Activated CD4-positive, alpha-beta memory T cell treated with anti-CD3 and anti-CD28 coated beads for 36 hours (primary cell): ENCODE measurements at regions of chr9 and their contacts with region 1.

Region 1: DNA sequence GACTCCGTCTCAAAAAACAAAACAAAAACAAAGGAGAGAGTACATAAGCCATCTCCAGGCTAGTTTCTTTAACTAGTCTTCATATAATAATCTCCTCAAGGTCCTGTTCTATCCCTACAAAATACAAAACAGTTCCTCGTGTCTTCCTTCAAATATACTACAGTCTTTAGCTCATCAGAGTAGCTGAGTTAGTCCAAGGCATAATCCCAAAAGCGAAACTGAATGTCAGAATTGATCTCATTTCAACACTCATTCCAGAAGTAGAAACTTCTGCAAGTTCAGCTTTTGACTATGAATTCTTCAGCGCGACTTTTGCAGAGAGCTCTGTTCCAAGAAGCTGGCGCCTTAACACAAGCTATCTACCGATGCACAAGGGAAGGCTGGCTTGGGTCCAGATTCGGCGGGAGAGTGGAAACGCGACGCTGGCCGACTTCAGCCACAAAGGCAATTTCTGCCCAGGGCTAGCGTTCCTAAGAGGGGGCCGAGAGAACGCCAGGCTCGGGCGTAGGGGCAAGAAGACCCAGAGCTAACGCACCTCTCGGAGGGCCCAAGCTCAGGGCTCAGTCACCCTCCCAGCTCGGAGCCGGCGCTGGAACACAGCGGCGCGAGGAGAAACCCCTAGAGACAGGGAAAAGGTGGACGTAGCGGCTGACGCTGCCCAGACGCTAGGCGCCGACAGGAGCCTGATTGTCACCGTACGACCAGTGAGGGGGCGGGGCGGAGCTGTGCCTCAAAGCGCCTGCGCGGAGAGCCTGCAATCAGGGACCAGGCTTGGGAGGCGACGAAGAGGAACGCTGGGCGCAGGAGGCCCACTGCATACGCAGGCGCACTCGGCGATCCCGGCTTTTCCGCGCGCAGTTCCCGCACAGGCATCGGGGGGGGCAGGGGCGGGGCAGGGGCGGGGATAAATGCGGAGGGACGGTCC is 469 bp upstream of the HSDL2 start:
- DNase-seq: peak; percentile 99
- H3K4me3 Mint-ChIP-seq: peak overlapping the region; percentile 97
- H3K27ac Mint-ChIP-seq: peak overlapping the region; percentile 98
- H3K4me1 Mint-ChIP-seq: peaks cover 40% of the 10 kb centered on the region
- H3K27me3 Mint-ChIP-seq: no peaks in the 10 kb centered on the region

Region 2: GRCh38 chr9:111743275-111743674 is 636.2 kb before region 1 on chr9:
- CTCF ChIA-PET with region 1: no interaction called
- POLR2A ChIA-PET with region 1: no interaction called
- intact Hi-C with region 1: loop called (anchors 5 kb)
- DNase-seq: peak; percentile 59
- H3K4me3 Mint-ChIP-seq: no peak overlapping the region
- H3K27ac Mint-ChIP-seq: peak overlapping the region; percentile 80
- H3K4me1 Mint-ChIP-seq: peaks cover 10% of the 10 kb centered on the region
- H3K27me3 Mint-ChIP-seq: no peaks in the 10 kb centered on the region

Region 3: DNA sequence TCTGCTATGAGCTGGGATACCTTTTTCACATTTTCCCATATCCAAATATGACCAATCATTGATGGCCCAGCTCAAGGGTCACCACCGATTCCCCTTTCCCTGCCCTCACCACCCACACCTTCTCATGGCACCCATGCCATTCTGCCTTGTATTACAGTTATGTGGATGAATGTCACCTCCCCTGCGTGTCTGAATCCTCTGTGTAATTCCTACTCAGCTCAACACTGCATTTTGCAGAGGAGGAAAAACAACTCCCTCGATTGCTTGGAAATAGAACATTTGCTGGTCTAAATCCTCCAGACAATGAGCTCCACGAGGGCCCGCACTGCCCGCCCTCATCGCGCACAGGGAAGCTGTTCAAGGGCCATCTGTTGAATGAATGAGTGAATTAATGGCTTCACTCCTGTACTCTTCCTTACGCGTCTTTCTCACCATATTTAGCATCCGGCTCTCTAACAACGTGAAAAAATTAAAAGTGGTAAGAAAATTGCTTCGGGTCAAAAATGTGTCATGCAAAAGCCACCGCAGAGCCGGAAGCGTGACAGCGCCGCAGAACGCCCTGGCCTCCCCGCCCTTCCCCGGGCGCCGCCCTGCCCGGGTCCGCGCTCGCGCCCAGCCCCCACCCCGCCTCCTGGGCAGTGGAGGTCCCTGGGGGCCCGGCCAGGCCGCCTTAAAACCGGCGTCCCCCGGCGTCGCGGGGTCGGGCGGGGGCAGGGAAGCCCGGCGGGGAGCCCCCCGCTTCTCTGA is 205.0 kb before region 1 on chr9:
- CTCF ChIA-PET with region 1: interaction called, 4 read pairs
- POLR2A ChIA-PET with region 1: interaction called, 3 read pairs
- intact Hi-C with region 1: loop called (anchors 1 kb)
- DNase-seq: peak; percentile 88
- H3K4me3 Mint-ChIP-seq: peak overlapping the region; percentile 80
- H3K27ac Mint-ChIP-seq: peak overlapping the region; percentile 84
- H3K4me1 Mint-ChIP-seq: peaks cover 40% of the 10 kb centered on the region
- H3K27me3 Mint-ChIP-seq: peaks cover 8% of the 10 kb centered on the region

Region 4: GRCh38 chr9:112278152-112278551 is 101.3 kb before region 1 on chr9:
- CTCF ChIA-PET with region 1: no interaction called
- POLR2A ChIA-PET with region 1: no interaction called
- intact Hi-C with region 1: no loop called
- DNase-seq: no peak
- H3K4me3 Mint-ChIP-seq: no peak overlapping the region
- H3K27ac Mint-ChIP-seq: no peak overlapping the region
- H3K4me1 Mint-ChIP-seq: peaks cover 56% of the 10 kb centered on the region
- H3K27me3 Mint-ChIP-seq: no peaks in the 10 kb centered on the region

Region 5: GRCh38 chr9:112348257-112349007 is 31.0 kb before region 1 on chr9:
- CTCF ChIA-PET with region 1: no interaction called
- POLR2A ChIA-PET with region 1: no interaction called
- intact Hi-C with region 1: no loop called
- DNase-seq: peak; percentile 87
- H3K4me3 Mint-ChIP-seq: peak overlapping the region; percentile 76
- H3K27ac Mint-ChIP-seq: peak overlapping the region; percentile 80
- H3K4me1 Mint-ChIP-seq: peaks cover 13% of the 10 kb centered on the region
- H3K27me3 Mint-ChIP-seq: peaks cover 2% of the 10 kb centered on the region

Region 6: GRCh38 chr9:112486221-112487007 is 107.0 kb after region 1 on chr9 and contains the start of gene KIAA1958:
- CTCF ChIA-PET with region 1: no interaction called
- POLR2A ChIA-PET with region 1: interaction called, 17 read pairs
- intact Hi-C with region 1: loop called (anchors 1 kb)
- DNase-seq: peak; percentile 91
- H3K4me3 Mint-ChIP-seq: peak within 1 kb of the TSS; percentile 90
- H3K27ac Mint-ChIP-seq: peak within 1 kb of the TSS; percentile 81
- H3K4me1 Mint-ChIP-seq: peaks cover 22% of the 10 kb centered on the region
- H3K27me3 Mint-ChIP-seq: no peaks in the 10 kb centered on the region
- total RNA-seq, gene KIAA1958: 6.1 to 6.5 TPM

Region 7: GRCh38 chr9:112793213-112793810 is 413.9 kb after region 1 on chr9:
- CTCF ChIA-PET with region 1: interaction called, 8 read pairs
- POLR2A ChIA-PET with region 1: no interaction called
- intact Hi-C with region 1: loop called (anchors 10 kb)
- DNase-seq: peak; percentile 90
- H3K4me3 Mint-ChIP-seq: no peak overlapping the region
- H3K27ac Mint-ChIP-seq: no peak overlapping the region
- H3K4me1 Mint-ChIP-seq: peaks cover 9% of the 10 kb centered on the region
- H3K27me3 Mint-ChIP-seq: no peaks in the 10 kb centered on the region